ENCODE measurements at regions of chr15 and their contacts with region 1.

Region 1: GRCh38 chr15:85667491-85668424 is 127.0 kb downstream of the KLHL25 start:
- DNase-seq: peak; percentile 57
- H3K4me3 Mint-ChIP-seq: no peak overlapping the region
- H3K27ac Mint-ChIP-seq: peak overlapping the region; percentile 91
- H3K4me1 Mint-ChIP-seq: peaks cover 19% of the 10 kb centered on the region
- H3K27me3 Mint-ChIP-seq: no peaks in the 10 kb centered on the region

Region 2: GRCh38 chr15:85504749-85505676 is 162.7 kb before region 1 on chr15:
- intact Hi-C with region 1: loop called (anchors 5 kb)
- DNase-seq: no peak
- H3K4me3 Mint-ChIP-seq: no peak overlapping the region
- H3K27ac Mint-ChIP-seq: peak overlapping the region; percentile 54
- H3K4me1 Mint-ChIP-seq: peaks cover 54% of the 10 kb centered on the region
- H3K27me3 Mint-ChIP-seq: no peaks in the 10 kb centered on the region

Region 3: GRCh38 chr15:85625856-85626255 is 41.9 kb before region 1 on chr15:
- intact Hi-C with region 1: loop called (anchors 1 kb)
- DNase-seq: no peak
- H3K4me3 Mint-ChIP-seq: peak overlapping the region; percentile 42
- H3K27ac Mint-ChIP-seq: peak overlapping the region; percentile 91
- H3K4me1 Mint-ChIP-seq: peaks cover 72% of the 10 kb centered on the region
- H3K27me3 Mint-ChIP-seq: no peaks in the 10 kb centered on the region

Region 4: DNA sequence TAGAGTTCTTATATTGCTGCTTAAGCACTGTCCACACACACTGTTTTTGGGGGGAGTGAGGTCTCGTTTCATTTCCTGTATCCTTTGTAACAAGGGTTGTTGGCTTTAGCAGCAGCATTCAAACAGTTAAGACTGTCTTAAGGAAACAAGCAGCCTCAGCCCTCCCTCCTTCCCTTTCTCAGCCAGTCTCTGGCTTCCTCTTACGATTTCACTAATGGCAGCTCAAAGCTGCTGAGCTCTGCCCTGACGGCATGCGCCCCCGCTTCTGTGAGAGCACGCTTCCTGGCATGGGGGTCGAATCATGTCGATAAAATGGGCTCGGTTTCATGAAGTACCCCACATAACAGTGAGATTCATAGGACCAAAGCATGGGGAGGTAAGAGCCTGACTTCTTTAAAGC is 22.0 kb after region 1 on chr15:
- intact Hi-C with region 1: loop called (anchors 1 kb)
- DNase-seq: peak; percentile 64
- H3K4me3 Mint-ChIP-seq: peak overlapping the region; percentile 94
- H3K27ac Mint-ChIP-seq: peak overlapping the region; percentile 100
- H3K4me1 Mint-ChIP-seq: peaks cover 70% of the 10 kb centered on the region
- H3K27me3 Mint-ChIP-seq: no peaks in the 10 kb centered on the region

Region 5: GRCh38 chr15:85707519-85708338 is 40.0 kb after region 1 on chr15:
- intact Hi-C with region 1: loop called (anchors 1 kb)
- DNase-seq: no peak
- H3K4me3 Mint-ChIP-seq: peak overlapping the region; percentile 80
- H3K27ac Mint-ChIP-seq: peak overlapping the region; percentile 98
- H3K4me1 Mint-ChIP-seq: peaks cover 74% of the 10 kb centered on the region
- H3K27me3 Mint-ChIP-seq: no peaks in the 10 kb centered on the region